CD8-positive, alpha-beta T cell (primary cell): ENCODE measurements at regions of chr12 and their contacts with region 1.

Region 1: GRCh38 chr12:67758119-67758518 is 109.6 kb downstream of the DYRK2 start:
- DNase-seq: no peak
- ATAC-seq: no peak
- H3K4me3 ChIP-seq: no peak overlapping the region
- H3K4me3 Mint-ChIP-seq: no peak overlapping the region
- H3K27ac ChIP-seq: no peak overlapping the region
- H3K27ac Mint-ChIP-seq: no peak overlapping the region
- H3K4me1 ChIP-seq: no peaks in the 10 kb centered on the region
- H3K4me1 Mint-ChIP-seq: peaks cover 11% of the 10 kb centered on the region
- H3K27me3 ChIP-seq: no peaks in the 10 kb centered on the region
- H3K27me3 Mint-ChIP-seq: no peaks in the 10 kb centered on the region
- CTCF ChIP-seq: no peak

Region 2: GRCh38 chr12:67819902-67820301 is 61.8 kb after region 1 on chr12:
- CTCF ChIA-PET with region 1: no interaction called
- POLR2A ChIA-PET with region 1: no interaction called
- intact Hi-C with region 1: loop called in 1 of 2 experiments (anchors 5 kb)
- DNase-seq: no peak
- ATAC-seq: no peak
- H3K4me3 ChIP-seq: no peak overlapping the region
- H3K4me3 Mint-ChIP-seq: no peak overlapping the region
- H3K27ac ChIP-seq: no peak overlapping the region
- H3K27ac Mint-ChIP-seq: no peak overlapping the region
- H3K4me1 ChIP-seq: no peaks in the 10 kb centered on the region
- H3K4me1 Mint-ChIP-seq: no peaks in the 10 kb centered on the region
- H3K27me3 ChIP-seq: no peaks in the 10 kb centered on the region
- H3K27me3 Mint-ChIP-seq: no peaks in the 10 kb centered on the region
- CTCF ChIP-seq: no peak